ENCODE measurements at regions of chr2 and their contacts with region 1.

Region 1: GRCh38 chr2:73385595-73386341 is at the start of gene ALMS1:
- H3K4me3 Mint-ChIP-seq: peak within 1 kb of the TSS; percentile 92
- H3K27ac Mint-ChIP-seq: peak within 1 kb of the TSS; percentile 94
- H3K4me1 Mint-ChIP-seq: peaks cover 33% of the 10 kb centered on the region
- H3K27me3 Mint-ChIP-seq: peaks cover 18% of the 10 kb centered on the region

Region 2: GRCh38 chr2:73293534-73294171 is 92.1 kb before region 1 on chr2 and contains the start of gene EGR4:
- intact Hi-C with region 1: loop called (anchors 5 kb)
- H3K4me3 Mint-ChIP-seq: peak within 1 kb of the TSS; percentile 80
- H3K27ac Mint-ChIP-seq: no peak within 1 kb of the TSS
- H3K4me1 Mint-ChIP-seq: peaks cover 18% of the 10 kb centered on the region
- H3K27me3 Mint-ChIP-seq: peaks cover 87% of the 10 kb centered on the region